OCI-LY7 (cell line): ENCODE measurements at regions of chr3 and their contacts with region 1.

Region 1: DNA sequence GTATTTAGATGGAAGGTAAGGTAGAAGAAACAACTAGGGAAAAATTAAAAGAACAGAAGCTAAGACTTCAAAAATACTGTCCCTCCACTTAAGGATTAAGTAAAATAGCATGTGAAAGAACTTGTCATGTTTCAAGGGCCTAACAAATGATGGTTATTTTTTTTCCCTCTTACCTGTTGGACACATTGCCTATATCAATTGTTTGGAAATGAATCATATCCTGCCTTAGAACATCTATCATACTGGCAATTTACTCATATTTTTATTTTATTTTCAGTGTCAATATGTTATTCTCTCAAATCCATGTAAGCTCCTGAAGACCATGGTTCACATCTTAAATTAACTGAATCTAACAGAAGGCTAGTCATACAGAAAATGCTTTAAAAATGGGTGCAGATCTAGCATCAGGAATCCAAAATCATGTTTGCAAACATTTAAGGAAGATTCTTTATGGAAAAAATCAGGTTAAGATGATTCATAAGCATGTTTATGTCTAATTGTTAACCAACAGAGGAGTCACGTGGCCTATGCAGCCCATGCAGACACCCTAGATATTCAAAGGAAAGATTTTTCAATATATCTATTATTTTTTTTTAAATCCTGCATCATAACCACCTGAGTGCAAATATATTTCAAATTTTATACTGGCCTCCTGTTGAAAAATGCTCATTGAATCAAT is 135.8 kb upstream of the TRIM42 start:
- DNase-seq: no peak
- H3K4me3 ChIP-seq: no peak overlapping the region
- H3K27ac ChIP-seq: no peak overlapping the region
- H3K4me1 ChIP-seq: peaks cover 25% of the 10 kb centered on the region
- CTCF ChIP-seq: no peak

Region 2: GRCh38 chr3:141266797-141267555 is 724.9 kb after region 1 on chr3:
- CTCF ChIA-PET with region 1: interaction called, 11 read pairs
- POLR2A ChIA-PET with region 1: no interaction called
- intact Hi-C with region 1: no loop called
- DNase-seq: peak; percentile 39
- H3K4me3 ChIP-seq: peak overlapping the region; percentile 52
- H3K27ac ChIP-seq: no peak overlapping the region
- H3K4me1 ChIP-seq: no peaks in the 10 kb centered on the region
- CTCF ChIP-seq: no peak